ENCODE measurements at regions of chr10 and their contacts with region 1.

Region 1: GRCh38 chr10:114103284-114103683 is 59.6 kb downstream of the ADRB1 start:
- DNase-seq: no peak
- ATAC-seq: peak; percentile 55 to 58
- H3K4me3 ChIP-seq: no peak overlapping the region
- H3K27ac ChIP-seq: no peak overlapping the region
- H3K4me1 ChIP-seq: peaks cover 5% of the 10 kb centered on the region
- H3K27me3 ChIP-seq: no peaks in the 10 kb centered on the region

Region 2: DNA sequence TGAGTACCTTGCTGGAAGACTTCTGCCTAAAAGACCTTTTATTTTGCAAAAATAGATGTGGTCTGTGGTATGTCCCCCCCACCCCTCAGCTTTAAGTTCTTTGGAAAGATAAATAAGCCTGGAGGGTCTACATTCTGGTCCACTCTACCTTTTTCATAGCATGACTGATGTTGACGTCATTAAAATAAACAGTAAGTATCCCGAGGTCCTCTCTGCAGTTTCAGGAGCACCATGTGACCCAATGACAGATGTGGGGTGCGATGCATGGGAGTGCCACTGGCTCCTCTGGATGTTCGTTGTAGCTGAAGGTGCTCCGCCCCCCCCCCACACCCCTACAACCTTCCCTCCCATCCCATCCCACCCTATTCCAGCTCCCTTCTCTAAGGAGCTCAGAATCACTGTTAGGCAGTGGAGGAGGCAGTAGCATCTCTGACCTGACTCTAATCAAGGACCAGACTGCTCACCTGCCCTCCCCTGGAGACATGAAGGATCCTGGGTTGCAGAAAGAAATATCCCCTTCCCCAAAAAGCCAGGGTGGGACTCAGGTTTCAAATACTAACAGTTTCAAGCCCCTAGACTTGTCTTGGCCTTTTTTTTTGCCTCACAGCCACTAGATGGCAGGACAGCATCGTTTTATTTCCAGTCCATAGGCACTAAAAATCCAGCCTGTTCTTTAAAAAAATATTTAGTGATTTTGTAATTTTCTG is 398.5 kb before region 1 on chr10:
- intact Hi-C with region 1: loop called (anchors 5 to 10 kb)
- DNase-seq: no peak
- ATAC-seq: peak in 1 of 2 donors; percentile 37
- H3K4me3 ChIP-seq: no peak overlapping the region
- H3K27ac ChIP-seq: no peak overlapping the region
- H3K4me1 ChIP-seq: no peaks in the 10 kb centered on the region
- H3K27me3 ChIP-seq: no peaks in the 10 kb centered on the region

Region 3: GRCh38 chr10:113802997-113803396 is 300.3 kb before region 1 on chr10:
- intact Hi-C with region 1: loop called (anchors 2 to 5 kb)
- DNase-seq: no peak
- ATAC-seq: no peak
- H3K4me3 ChIP-seq: no peak overlapping the region
- H3K27ac ChIP-seq: no peak overlapping the region
- H3K4me1 ChIP-seq: no peaks in the 10 kb centered on the region
- H3K27me3 ChIP-seq: no peaks in the 10 kb centered on the region

Region 4: DNA sequence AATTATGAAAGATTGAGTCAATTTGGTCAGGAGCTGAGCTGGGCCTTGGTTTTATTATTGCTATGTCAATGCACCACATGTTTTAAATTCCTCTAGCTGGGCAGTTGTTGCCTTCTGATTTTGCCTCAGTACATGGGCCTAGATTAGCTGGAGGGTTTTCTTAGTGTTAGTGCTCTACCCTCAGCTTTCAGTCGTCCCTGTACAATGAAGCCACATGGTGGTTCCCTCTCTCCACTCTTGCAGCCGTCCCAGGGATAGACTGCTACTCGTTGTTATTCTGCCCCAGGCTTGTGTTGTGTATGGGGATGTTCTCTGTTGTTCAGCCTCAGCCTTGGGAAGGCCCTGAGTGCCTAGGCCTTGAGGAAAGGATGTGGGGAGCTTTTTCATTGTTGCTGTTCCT is 211.8 kb before region 1 on chr10:
- intact Hi-C with region 1: loop called in 1 of 4 experiments (anchors 5 kb)
- DNase-seq: no peak
- ATAC-seq: peak; percentile 73 to 80
- H3K4me3 ChIP-seq: no peak overlapping the region
- H3K27ac ChIP-seq: peak overlapping the region; percentile 86
- H3K4me1 ChIP-seq: no peaks in the 10 kb centered on the region
- H3K27me3 ChIP-seq: no peaks in the 10 kb centered on the region

Measured in right cardiac atrium (tissue), 5 donors.